Activated CD4-positive, alpha-beta memory T cell treated with anti-CD3 and anti-CD28 coated beads, Interleukin-2, amount 10 ng/mL, durations not matched to agents 7 days and 5 days (primary cell): ENCODE measurements at regions of chr10 and their contacts with region 1.

Region 1: GRCh38 chr10:88932539-88933256 is 19.9 kb downstream of the ACTA2 start:
- DNase-seq: peak; percentile 37
- H3K4me3 Mint-ChIP-seq: no peak overlapping the region
- H3K27ac Mint-ChIP-seq: no peak overlapping the region
- H3K4me1 Mint-ChIP-seq: peaks cover 21% of the 10 kb centered on the region
- H3K27me3 Mint-ChIP-seq: no peaks in the 10 kb centered on the region

Region 2: DNA sequence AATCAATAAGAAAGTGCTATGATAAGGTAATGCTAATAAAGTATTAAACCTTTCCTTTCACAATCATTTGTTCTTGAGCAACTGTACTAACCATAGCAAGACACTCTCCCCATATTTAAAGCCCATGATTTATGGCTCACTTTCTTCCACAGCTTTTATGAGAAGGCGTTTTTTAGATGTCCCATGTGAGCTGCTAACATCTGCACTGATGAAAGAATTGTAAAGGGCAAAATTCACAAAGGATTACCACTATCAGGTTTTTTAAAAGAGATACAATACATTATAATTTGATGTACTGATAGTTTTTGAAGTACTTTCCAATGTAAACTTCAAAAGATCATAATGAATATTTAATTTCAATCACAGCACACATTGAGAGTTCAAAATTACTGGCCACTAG is 425.3 kb before region 1 on chr10:
- CTCF ChIA-PET with region 1: no interaction called
- POLR2A ChIA-PET with region 1: no interaction called
- DNase-seq: no peak
- H3K4me3 Mint-ChIP-seq: no peak overlapping the region
- H3K27ac Mint-ChIP-seq: no peak overlapping the region
- H3K4me1 Mint-ChIP-seq: no peaks in the 10 kb centered on the region
- H3K27me3 Mint-ChIP-seq: no peaks in the 10 kb centered on the region

Region 3: DNA sequence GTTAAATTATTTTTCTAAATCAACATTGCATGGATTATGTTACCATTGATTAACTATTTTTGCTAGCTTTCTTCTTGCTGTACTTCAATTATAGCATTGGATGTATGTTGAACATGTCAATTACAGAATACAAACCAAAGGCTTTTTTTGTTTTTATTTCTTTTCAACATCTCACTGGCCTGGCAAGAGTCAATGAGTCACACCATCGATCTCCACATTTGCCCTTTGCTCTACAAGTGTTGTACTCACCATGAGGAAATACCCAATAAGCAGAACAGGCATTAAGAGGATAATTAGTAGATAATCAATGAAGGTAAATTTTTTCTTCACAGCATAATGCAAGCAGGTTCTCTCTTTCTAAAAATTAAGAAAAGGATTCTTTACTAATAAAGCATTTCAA is 104.4 kb before region 1 on chr10:
- CTCF ChIA-PET with region 1: interaction called, 211 read pairs
- POLR2A ChIA-PET with region 1: interaction called, 3 read pairs
- DNase-seq: no peak
- H3K4me3 Mint-ChIP-seq: no peak overlapping the region
- H3K27ac Mint-ChIP-seq: no peak overlapping the region
- H3K4me1 Mint-ChIP-seq: peaks cover 80% of the 10 kb centered on the region
- H3K27me3 Mint-ChIP-seq: no peaks in the 10 kb centered on the region

Region 4: DNA sequence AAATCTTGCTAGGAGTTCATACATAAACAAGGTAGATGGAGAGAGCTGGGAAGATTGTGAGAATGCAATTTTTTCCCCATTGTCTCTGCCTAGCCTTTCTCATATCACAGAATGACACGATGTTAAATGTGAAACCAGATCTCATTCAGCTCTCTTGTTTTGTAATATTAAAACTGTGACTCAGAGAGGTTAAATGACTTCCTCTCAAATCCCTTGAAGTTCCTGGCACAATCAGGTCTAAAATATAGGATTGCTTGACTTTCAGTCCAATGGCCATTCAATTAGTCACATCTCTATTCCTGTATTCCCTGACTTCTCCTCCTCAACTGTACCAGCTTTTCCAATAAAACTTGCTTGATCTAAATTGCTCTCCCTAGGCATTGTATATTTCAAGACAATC is 84.2 kb before region 1 on chr10:
- CTCF ChIA-PET with region 1: interaction called, 12 read pairs
- POLR2A ChIA-PET with region 1: interaction called, 3 read pairs
- DNase-seq: no peak
- H3K4me3 Mint-ChIP-seq: no peak overlapping the region
- H3K27ac Mint-ChIP-seq: no peak overlapping the region
- H3K4me1 Mint-ChIP-seq: peaks cover 17% of the 10 kb centered on the region
- H3K27me3 Mint-ChIP-seq: peaks cover 12% of the 10 kb centered on the region

Region 5: DNA sequence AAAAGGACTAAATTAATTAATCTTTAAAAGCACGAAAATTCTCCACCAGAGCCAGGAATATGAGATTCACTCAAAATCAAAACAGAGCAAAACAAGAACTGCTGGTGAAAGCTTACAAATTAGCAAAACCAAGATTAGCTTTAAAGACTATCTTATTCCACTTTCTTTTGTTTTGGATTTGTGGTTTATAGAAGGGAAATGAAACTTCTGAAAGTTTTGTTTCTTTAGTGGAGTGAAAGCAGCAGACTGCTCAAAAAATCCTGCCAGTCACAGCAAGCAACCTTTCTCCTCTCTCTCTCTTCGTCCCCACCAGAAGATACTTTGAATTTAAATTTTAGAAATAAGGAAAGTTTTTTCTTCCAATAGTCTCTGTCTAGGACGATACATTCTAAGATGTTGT is 12.1 kb after region 1 on chr10:
- CTCF ChIA-PET with region 1: interaction called, 40 read pairs
- POLR2A ChIA-PET with region 1: interaction called, 3 read pairs
- DNase-seq: no peak
- H3K4me3 Mint-ChIP-seq: no peak overlapping the region
- H3K27ac Mint-ChIP-seq: no peak overlapping the region
- H3K4me1 Mint-ChIP-seq: peaks cover 17% of the 10 kb centered on the region
- H3K27me3 Mint-ChIP-seq: no peaks in the 10 kb centered on the region

Region 6: DNA sequence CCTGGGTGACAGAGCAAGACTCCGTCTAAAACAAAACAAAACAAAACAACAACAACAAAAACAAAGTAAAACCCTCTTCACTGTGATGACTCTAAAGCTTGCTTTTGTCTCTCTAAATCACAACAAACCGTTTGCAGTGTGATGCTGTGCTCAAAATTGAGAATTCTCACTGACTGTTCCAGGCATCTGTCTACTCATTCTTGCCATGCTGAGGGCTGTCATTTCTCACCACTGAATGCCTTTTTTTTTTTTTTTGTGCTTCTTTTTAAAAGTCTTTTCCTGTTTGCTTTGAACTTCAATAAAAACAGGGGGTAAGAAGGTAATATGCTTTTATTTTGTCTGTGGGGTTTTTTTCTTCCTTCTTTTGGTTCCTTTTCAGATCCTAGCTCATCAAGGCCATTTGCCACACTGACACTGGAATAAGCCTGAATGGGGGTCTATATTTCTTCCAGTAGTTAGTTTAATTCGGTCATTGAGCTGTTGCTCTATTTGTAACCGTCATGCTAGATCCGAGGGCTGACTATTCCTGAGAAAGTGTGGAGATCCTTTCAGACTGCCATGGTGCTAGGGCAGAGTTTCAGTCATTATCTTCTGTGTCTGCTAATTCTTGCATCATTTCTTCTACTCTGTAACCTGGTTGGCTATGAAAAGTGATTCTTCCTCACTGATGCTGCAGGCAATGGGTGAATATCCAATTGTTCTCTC is 68.5 kb after region 1 on chr10:
- CTCF ChIA-PET with region 1: interaction called, 63 read pairs
- POLR2A ChIA-PET with region 1: no interaction called
- DNase-seq: peak; percentile 58
- H3K4me3 Mint-ChIP-seq: peak overlapping the region; percentile 71
- H3K27ac Mint-ChIP-seq: peak overlapping the region; percentile 84
- H3K4me1 Mint-ChIP-seq: peaks cover 72% of the 10 kb centered on the region
- H3K27me3 Mint-ChIP-seq: no peaks in the 10 kb centered on the region

Region 7: DNA sequence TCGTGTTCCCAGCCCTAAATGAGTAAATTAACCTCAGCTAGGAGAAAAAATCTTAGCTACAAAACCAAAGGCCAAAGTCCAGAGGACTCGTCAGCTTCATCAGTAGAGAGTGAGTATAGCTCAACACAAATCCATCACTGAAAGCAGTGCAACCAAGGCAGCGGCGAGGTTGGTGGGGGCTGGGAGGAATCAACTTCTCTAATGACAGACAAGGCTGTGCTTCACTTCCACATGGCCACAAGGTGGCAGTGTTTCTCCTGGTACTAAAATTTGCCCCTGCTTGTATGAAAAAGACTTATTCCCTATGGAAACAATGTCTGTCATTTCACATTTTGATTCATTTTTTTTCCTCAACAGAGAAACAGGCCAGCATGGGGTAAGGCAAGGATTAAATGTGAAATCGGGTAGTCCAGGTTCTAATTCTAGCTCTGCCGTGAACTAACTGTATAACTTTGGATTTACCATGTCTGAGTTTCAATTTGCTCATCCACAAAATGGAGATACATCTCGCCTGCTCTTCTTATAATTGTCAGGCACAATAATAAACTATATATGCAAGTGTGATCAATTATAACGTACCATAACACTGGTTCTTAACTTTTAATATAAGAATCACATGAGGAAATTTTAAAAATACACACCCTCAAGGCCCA is 97.2 kb after region 1 on chr10:
- CTCF ChIA-PET with region 1: interaction called, 32 read pairs
- POLR2A ChIA-PET with region 1: interaction called, 3 read pairs
- DNase-seq: peak; percentile 73
- H3K4me3 Mint-ChIP-seq: no peak overlapping the region
- H3K27ac Mint-ChIP-seq: no peak overlapping the region
- H3K4me1 Mint-ChIP-seq: peaks cover 23% of the 10 kb centered on the region
- H3K27me3 Mint-ChIP-seq: no peaks in the 10 kb centered on the region

Region 8: GRCh38 chr10:89217057-89217990 is 284.6 kb after region 1 on chr10:
- CTCF ChIA-PET with region 1: interaction called, 42 read pairs
- POLR2A ChIA-PET with region 1: interaction called, 4 read pairs
- DNase-seq: peak; percentile 63
- H3K4me3 Mint-ChIP-seq: no peak overlapping the region
- H3K27ac Mint-ChIP-seq: no peak overlapping the region
- H3K4me1 Mint-ChIP-seq: peaks cover 10% of the 10 kb centered on the region
- H3K27me3 Mint-ChIP-seq: no peaks in the 10 kb centered on the region

Region 9: DNA sequence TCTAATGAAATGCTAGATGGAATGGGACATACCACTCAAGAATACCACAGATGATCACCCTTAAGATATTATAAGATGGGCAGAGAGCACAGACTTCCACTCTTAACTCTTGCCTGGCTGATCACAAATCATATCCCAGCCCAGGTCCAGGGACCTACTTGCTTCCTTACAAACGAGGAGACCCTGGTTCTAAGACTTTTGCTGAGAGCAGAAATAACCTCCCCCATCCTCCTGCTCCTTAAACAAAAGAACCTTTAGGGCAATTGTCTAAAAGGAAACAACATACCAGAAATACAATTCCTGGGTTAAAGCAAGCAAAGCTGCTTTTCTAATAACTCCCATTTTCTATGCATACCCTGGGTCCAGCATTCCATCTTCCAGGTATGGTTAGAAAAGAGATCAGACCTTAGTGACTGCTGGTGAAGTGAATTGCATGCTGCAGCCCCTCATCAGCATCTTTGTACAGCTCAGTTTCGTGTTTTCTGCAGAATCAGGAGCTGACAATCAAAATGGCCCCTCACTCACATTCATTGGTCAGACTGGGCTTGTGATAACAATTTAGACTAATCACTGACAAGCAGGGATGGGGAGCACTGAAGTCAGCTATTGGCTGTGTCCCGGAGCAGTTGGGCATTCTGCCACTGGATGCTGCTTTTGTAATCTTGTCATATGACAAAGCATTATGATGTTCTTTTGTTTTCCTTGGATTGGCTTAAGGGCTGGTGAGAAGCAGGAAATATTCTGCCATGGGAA is 409.7 kb after region 1 on chr10:
- CTCF ChIA-PET with region 1: no interaction called
- POLR2A ChIA-PET with region 1: no interaction called
- DNase-seq: no peak
- H3K4me3 Mint-ChIP-seq: no peak overlapping the region
- H3K27ac Mint-ChIP-seq: no peak overlapping the region
- H3K4me1 Mint-ChIP-seq: peaks cover 10% of the 10 kb centered on the region
- H3K27me3 Mint-ChIP-seq: peaks cover 20% of the 10 kb centered on the region